HepG2 (cell line): ENCODE measurements at regions of chr2 and their contacts with region 1.

Region 1: GRCh38 chr2:233976690-233977294 is 59.6 kb downstream of the TRPM8 start:
- DNase-seq: peak; percentile 60
- ATAC-seq: peak; percentile 85
- H3K4me3 ChIP-seq: peak overlapping the region in 1 of 3 experiments; percentile 9; a peak in 2 of 6 replicates
- H3K27ac ChIP-seq: no peak overlapping the region
- H3K4me1 ChIP-seq: peaks cover 40% of the 10 kb centered on the region
- H3K27me3 ChIP-seq: no peaks in the 10 kb centered on the region
- CTCF ChIP-seq: peak; percentile 84
- EP300 ChIP-seq: peak in 1 of 2 experiments; percentile 62; a peak in 1 of 4 replicates
- POLR2A ChIP-seq: no peak
- RAD21 ChIP-seq: peak; percentile 74

Region 2: GRCh38 chr2:234257856-234258561 is 281.2 kb after region 1 on chr2:
- CTCF ChIA-PET with region 1: interaction called, 10 read pairs
- POLR2A ChIA-PET with region 1: no interaction called
- in situ Hi-C with region 1: loop called (anchors 10 kb)
- intact Hi-C with region 1: loop called (anchors 1 kb)
- DNase-seq: peak; percentile 64
- ATAC-seq: peak; percentile 97
- H3K4me3 ChIP-seq: no peak overlapping the region
- H3K27ac ChIP-seq: no peak overlapping the region
- H3K4me1 ChIP-seq: no peaks in the 10 kb centered on the region
- H3K27me3 ChIP-seq: no peaks in the 10 kb centered on the region
- CTCF ChIP-seq: peak; percentile 70
- EP300 ChIP-seq: no peak
- POLR2A ChIP-seq: no peak
- RAD21 ChIP-seq: peak; percentile 51; the same call in 1 of the 2 replicates

Region 3: GRCh38 chr2:234269769-234270204 is 293.0 kb after region 1 on chr2:
- CTCF ChIA-PET with region 1: no interaction called
- POLR2A ChIA-PET with region 1: no interaction called
- in situ Hi-C with region 1: no loop called
- intact Hi-C with region 1: no loop called
- DNase-seq: no peak
- ATAC-seq: no peak
- H3K4me3 ChIP-seq: no peak overlapping the region
- H3K27ac ChIP-seq: no peak overlapping the region
- H3K4me1 ChIP-seq: no peaks in the 10 kb centered on the region
- H3K27me3 ChIP-seq: no peaks in the 10 kb centered on the region
- CTCF ChIP-seq: no peak
- EP300 ChIP-seq: no peak
- POLR2A ChIP-seq: no peak
- RAD21 ChIP-seq: no peak

Region 4: DNA sequence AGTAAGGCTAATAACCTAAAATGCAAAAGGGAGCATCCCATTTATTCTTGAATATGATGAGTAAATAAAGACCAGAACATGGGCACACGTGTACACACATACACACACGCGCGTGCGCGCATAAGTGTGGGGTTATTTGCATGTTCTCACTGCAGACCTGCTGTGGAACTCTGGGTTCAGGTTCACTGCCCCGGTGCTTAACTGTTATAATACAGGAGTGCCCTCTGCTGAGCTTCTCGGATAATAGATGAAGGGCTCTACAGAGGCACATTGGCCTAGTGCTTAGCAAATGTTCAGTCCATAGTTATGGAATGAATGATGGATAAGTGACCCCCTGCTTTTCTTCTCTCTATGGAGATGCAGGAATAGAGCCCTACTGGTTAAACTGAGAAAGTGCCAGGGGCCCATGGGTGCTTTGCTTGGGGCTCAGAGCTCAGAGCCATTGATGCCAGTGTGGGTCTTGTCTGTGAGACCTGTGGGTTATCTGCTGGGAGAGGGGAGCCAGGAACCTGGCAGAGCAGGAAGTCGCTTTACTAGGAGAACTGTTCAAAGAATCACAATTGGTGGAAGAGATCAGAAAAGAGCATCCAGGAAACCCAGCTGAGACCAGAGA is 523.7 kb after region 1 on chr2:
- CTCF ChIA-PET with region 1: interaction called, 7 read pairs
- POLR2A ChIA-PET with region 1: no interaction called
- in situ Hi-C with region 1: loop called (anchors 5 kb)
- intact Hi-C with region 1: loop called (anchors 2 kb)
- DNase-seq: peak; percentile 66
- ATAC-seq: peak; percentile 75
- H3K4me3 ChIP-seq: no peak overlapping the region
- H3K27ac ChIP-seq: no peak overlapping the region
- H3K4me1 ChIP-seq: peaks cover 7% of the 10 kb centered on the region
- H3K27me3 ChIP-seq: peaks cover 9 to 14% of the 10 kb centered on the region in 2 experiments
- CTCF ChIP-seq: peak; percentile 81
- EP300 ChIP-seq: no peak
- POLR2A ChIP-seq: no peak
- RAD21 ChIP-seq: peak; percentile 86

Region 5: GRCh38 chr2:234544659-234545611 is 568.1 kb after region 1 on chr2:
- CTCF ChIA-PET with region 1: interaction called, 16 read pairs
- POLR2A ChIA-PET with region 1: no interaction called
- in situ Hi-C with region 1: loop called (anchors 10 kb)
- intact Hi-C with region 1: loop called (anchors 1 kb)
- DNase-seq: peak; percentile 44
- ATAC-seq: peak; percentile 91
- H3K4me3 ChIP-seq: no peak overlapping the region; a peak in 1 of 6 replicates
- H3K27ac ChIP-seq: no peak overlapping the region
- H3K4me1 ChIP-seq: peaks cover 19% of the 10 kb centered on the region
- H3K27me3 ChIP-seq: peaks cover 4 to 54% of the 10 kb centered on the region in 2 experiments; a peak in 4 of 5 replicates
- CTCF ChIP-seq: peak; percentile 95
- EP300 ChIP-seq: no peak
- POLR2A ChIP-seq: no peak
- RAD21 ChIP-seq: peak; percentile 76

Region 6: GRCh38 chr2:235106874-235107639 is 1130.3 kb after region 1 on chr2:
- CTCF ChIA-PET with region 1: no interaction called
- POLR2A ChIA-PET with region 1: no interaction called
- in situ Hi-C with region 1: loop called (anchors 25 kb)
- intact Hi-C with region 1: no loop called
- DNase-seq: peak; percentile 79
- ATAC-seq: peak; percentile 88
- H3K4me3 ChIP-seq: no peak overlapping the region
- H3K27ac ChIP-seq: no peak overlapping the region
- H3K4me1 ChIP-seq: peaks cover 30% of the 10 kb centered on the region
- H3K27me3 ChIP-seq: peaks cover 7 to 39% of the 10 kb centered on the region in 2 experiments
- CTCF ChIP-seq: peak; percentile 95
- EP300 ChIP-seq: no peak
- POLR2A ChIP-seq: no peak
- RAD21 ChIP-seq: peak; percentile 88

Region 7: DNA sequence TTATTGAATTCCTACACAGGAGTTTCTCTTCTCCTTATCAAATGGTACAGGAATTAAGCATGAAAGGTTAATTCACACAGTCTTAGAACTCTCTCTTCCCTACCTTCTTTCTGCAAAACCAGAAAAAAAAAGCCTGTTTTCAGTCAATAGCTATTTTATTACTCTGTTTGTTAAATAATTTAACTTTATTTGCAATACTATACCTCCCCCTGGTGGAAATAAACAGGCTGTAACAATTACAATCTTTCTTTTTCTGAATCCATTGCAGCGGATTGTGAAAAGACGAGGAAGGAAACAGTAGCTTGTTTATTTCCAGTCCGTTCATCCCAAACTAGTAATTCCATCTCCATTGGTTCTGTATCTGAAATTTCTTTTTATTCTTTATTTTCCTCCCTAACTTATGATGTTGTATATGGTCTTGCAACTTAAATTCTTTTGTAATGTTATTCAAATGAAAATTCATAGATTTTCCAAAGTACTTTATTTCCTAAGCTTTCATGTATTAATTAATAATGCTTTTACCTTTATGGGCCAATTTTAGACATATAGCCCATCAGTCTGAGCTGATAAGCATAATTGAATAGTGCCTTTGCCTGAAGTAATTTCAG is 1140.2 kb after region 1 on chr2:
- CTCF ChIA-PET with region 1: interaction called, 4 read pairs
- POLR2A ChIA-PET with region 1: no interaction called
- in situ Hi-C with region 1: loop called (anchors 25 kb)
- intact Hi-C with region 1: loop called (anchors 2 kb)
- DNase-seq: peak; percentile 50
- ATAC-seq: no peak
- H3K4me3 ChIP-seq: no peak overlapping the region
- H3K27ac ChIP-seq: no peak overlapping the region
- H3K4me1 ChIP-seq: no peaks in the 10 kb centered on the region
- H3K27me3 ChIP-seq: peaks cover 0 to 11% of the 10 kb centered on the region in 2 experiments; a peak in 2 of 5 replicates
- CTCF ChIP-seq: peak; percentile 63
- EP300 ChIP-seq: no peak
- POLR2A ChIP-seq: no peak
- RAD21 ChIP-seq: peak; percentile 68